HEK293T (cell line): ENCODE measurements at regions of chrX and their contacts with region 1.

Region 1: DNA sequence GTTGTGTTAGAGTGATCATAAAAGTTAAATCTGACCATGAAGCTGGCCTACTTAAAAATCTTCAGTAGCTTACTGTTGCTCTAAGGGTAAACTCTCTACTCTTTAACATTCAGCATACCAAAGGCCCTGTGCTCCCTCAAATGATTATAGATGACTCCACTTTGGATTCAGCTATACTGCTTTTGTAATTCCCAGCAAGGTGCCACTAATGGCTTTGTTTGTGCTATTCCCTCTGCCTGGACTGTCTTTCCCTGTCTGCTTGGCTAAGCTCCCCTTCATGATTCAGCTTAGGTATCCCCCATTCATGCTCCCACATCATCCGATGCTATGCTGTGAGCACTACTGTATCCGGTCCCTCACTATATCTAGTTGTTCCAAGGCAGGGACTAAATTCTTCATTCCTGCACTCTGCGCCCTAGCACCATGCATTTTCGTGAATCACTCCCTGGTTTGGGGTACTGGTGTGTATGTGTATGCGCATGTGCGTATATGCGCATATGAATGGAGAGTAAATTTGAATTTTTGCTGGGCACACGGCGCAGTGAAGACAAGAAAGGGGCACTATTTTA is 453 bp upstream of the PBDC1 start:
- DNase-seq: no peak

Region 2: GRCh38 chrX:76183289-76184049 is 11.1 kb after region 1 on chrX:
- CTCF ChIA-PET with region 1: no interaction called
- POLR2A ChIA-PET with region 1: interaction called, 14 read pairs
- DNase-seq: no peak